ENCODE measurements at regions of chr10 and their contacts with region 1.

Region 1: DNA sequence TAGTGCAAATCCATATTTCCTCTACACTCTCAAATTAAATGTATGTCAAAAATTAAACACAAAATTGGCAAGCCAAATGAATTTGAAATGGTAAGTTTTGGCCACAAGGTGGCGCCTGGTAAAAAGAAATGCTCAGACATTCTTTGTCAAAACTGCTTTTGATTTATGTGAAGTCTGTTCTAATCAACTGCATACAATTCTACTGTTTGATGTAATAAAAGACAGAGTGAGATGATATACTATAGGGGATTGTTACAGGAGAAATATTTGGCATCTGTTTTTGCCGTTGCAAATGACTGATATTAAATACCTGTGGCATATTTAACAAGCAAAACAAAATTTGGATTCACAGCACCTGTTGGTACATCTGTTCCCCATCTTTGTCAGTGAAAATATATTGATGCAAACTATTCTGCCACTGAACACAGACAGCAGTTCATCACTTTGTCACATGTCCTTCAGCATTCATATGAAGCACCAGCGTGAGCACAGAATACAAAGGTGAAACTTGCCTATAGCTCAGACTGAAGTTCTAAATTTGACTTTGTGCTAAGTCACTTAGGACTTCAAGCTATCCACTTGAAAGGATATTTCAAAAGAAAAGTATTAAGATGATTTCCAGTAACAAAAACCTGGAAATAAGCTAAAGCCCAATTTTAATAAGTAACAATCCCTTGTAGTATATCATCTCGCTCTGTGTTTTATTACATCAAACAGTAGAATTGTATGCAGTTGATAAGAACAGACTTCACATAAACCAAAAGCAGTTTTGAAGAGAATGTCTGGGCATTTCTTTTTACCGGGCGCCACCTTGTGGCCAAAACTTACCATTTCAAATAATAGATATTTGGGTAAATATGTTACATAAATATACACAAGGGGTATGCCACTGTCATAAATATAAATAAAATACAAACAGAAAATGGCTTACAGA is 10.2 kb upstream of the CH25H start:
- ATAC-seq: peak in 4 of 8 experiments; percentile 28 to 49 (median 36)
- H3K4me3 ChIP-seq: no peak overlapping the region
- H3K27ac ChIP-seq: no peak overlapping the region
- H3K4me1 ChIP-seq: peaks cover 0 to 3% of the 10 kb centered on the region in 2 donors

Region 2: GRCh38 chr10:88932539-88933256 is 284.6 kb before region 1 on chr10:
- in situ Hi-C with region 1: loop called in 5 of 9 experiments (anchors 10 to 25 kb)
- ATAC-seq: peak; percentile 86 to 98 (median 92)
- H3K4me3 ChIP-seq: no peak overlapping the region
- H3K27ac ChIP-seq: no peak overlapping the region
- H3K4me1 ChIP-seq: peaks cover 0 to 2% of the 10 kb centered on the region in 2 donors

Region 3: DNA sequence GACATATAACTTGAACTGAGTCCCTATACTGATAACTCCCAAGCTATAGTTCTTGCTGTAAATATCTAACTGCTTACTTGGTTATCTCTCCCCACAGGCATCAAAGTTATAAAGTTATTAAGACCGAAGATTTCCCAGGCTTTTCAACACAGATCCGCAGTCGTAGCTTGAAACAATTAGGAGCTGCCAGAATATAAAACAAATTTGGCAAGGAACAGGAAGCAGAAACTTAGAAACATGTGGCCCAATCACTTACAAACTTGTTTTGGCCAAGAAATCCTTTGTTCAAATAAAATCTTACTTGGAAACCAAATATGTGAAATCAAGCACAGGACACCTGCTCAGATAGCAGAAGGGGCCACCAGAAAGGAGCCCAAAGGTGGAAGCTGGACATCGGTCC is 309.0 kb after region 1 on chr10:
- in situ Hi-C with region 1: no loop called
- ATAC-seq: no peak
- H3K4me3 ChIP-seq: no peak overlapping the region
- H3K27ac ChIP-seq: no peak overlapping the region
- H3K4me1 ChIP-seq: no peaks in the 10 kb centered on the region